ENCODE measurements at regions of chr2 and their contacts with region 1.

Region 1: DNA sequence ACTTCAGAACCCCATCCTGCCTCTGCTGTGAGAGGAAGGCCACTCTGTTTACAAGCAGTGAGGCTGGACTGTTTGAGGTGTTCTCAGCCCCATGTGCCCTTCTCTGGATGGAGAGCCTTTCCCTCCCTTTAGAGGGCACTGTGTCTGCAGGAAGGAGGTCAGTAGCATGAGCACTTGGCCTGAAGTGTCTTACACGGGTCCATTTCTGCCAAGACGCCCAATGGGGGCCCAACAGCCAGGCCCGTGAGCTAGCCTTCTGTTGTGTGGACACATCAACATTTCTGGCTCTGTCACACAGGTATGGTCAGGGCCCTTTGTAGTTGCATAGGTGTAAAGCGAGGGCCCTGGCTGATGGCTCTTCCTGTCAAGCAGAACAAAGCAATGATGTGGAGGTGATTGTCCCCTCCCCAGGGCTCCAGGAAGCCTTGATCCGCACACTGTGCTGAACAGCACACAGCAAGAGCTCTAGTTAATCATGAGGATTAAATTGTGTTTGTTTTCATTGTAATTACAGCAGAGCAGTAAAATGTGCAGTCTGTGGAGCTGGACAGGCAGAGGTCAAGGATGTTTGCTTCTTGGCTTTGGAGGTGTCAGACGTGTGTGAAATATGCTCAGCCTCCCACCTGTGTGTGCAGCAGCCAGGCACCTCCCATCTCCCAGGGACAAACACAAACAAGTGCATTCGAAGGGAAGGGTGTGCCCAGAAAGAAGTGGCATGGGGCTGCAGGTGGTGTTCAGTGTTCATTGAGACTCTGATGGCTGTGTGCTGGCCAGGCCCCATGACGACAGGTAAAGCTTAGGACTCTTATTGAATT is 132.1 kb downstream of the SH3RF3 start:
- DNase-seq: no peak
- H3K4me3 ChIP-seq: no peak overlapping the region
- H3K27ac ChIP-seq: no peak overlapping the region
- H3K4me1 ChIP-seq: no peaks in the 10 kb centered on the region
- H3K27me3 ChIP-seq: no peaks in the 10 kb centered on the region
- CTCF ChIP-seq: peak; percentile 56 to 74 (median 57)
- EP300 ChIP-seq: no peak
- POLR2A ChIP-seq: no peak
- RAD21 ChIP-seq: peak; percentile 61 to 69

Region 2: DNA sequence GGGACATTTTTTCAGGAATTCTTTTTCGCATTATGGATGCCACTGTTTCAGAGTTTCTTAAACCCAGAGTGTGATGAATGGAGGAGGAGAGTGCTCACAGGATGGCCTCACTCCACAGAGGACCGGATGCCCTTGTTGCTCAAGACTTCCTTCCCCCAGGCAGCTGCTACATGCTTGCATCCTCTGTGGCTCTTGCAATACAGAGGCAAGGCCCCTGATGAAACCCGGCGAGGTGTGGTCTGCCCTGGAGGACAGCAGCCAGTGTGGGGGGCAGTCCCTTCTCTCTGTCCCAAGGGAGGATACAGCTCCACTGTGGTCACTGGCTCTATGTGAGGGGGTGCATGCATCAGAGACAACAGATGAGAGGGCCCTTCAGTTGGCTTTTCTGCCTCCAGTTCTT is 22.5 kb before region 1 on chr2:
- CTCF ChIA-PET with region 1: interaction called, 15 read pairs
- POLR2A ChIA-PET with region 1: no interaction called
- DNase-seq: no peak
- H3K4me3 ChIP-seq: no peak overlapping the region
- H3K27ac ChIP-seq: no peak overlapping the region
- H3K4me1 ChIP-seq: no peaks in the 10 kb centered on the region; a peak in 1 of 7 replicates
- H3K27me3 ChIP-seq: no peaks in the 10 kb centered on the region
- CTCF ChIP-seq: no peak
- EP300 ChIP-seq: no peak
- POLR2A ChIP-seq: no peak
- RAD21 ChIP-seq: no peak

Region 3: GRCh38 chr2:109280793-109281192 is 19.7 kb after region 1 on chr2:
- CTCF ChIA-PET with region 1: interaction called, 12 read pairs
- POLR2A ChIA-PET with region 1: no interaction called
- DNase-seq: no peak
- H3K4me3 ChIP-seq: no peak overlapping the region
- H3K27ac ChIP-seq: no peak overlapping the region
- H3K4me1 ChIP-seq: peaks cover 0 to 5% (median 4%) of the 10 kb centered on the region in 4 experiments; a peak in 5 of 7 replicates
- H3K27me3 ChIP-seq: no peaks in the 10 kb centered on the region
- CTCF ChIP-seq: no peak
- EP300 ChIP-seq: no peak
- POLR2A ChIP-seq: no peak
- RAD21 ChIP-seq: peak in 1 of 2 experiments; percentile 39; a peak in 2 of 4 replicates

Measured in H1 (cell line).